Ascending aorta (tissue), 2 donors: ENCODE measurements at regions of chr1 and their contacts with region 1.

Region 1: DNA sequence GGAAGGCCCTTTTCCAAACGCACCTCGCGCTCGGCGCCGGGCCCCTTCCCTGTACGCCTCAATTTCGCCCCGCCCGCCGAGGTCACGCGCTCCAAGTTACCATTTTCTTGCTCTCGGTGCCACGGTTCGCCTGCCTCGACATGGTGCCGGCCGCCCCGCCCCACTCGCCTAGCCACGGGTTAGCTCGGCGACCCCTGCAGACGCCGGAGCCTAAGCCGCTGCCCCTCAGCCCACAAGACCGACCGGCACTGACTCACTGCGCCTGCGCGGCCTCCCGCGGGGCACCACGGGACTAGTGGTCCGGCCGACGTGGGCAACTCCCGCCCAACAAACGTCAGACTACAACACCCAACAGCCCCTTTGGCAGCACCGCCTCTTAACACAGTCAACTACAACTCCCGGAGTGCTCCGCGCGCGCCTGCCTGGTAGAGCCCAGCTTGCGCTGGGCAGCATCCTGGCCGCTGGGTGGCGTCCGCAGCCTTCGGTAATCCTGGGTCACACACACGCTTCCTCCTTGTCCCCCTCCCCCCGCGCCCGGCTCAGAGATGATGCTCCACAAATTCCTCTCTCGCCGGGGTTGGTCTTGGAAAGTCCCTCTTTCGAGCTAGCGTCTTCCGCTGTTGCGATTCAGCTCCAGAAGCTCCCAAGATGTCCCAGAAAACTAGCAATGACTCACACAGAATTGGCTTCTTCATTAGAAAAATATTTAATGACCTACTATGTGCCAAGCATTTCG is at the start of gene TRAPPC3:
- DNase-seq: peak; percentile 100
- H3K4me3 ChIP-seq: peak within 1 kb of the TSS; percentile 71 to 77
- H3K27ac ChIP-seq: peak within 1 kb of the TSS; percentile 93 to 98
- H3K4me1 ChIP-seq: peaks cover 26 to 36% of the 10 kb centered on the region in 2 donors
- H3K27me3 ChIP-seq: no peaks in the 10 kb centered on the region
- CTCF ChIP-seq: peak; percentile 88 to 98 (median 95)
- total RNA-seq, gene TRAPPC3: 52.0 TPM

Region 2: GRCh38 chr1:36034692-36035091 is 114.7 kb before region 1 on chr1:
- intact Hi-C with region 1: no loop called
- DNase-seq: no peak
- H3K4me3 ChIP-seq: no peak overlapping the region
- H3K27ac ChIP-seq: no peak overlapping the region
- H3K4me1 ChIP-seq: no peaks in the 10 kb centered on the region
- H3K27me3 ChIP-seq: no peaks in the 10 kb centered on the region
- CTCF ChIP-seq: no peak

Region 3: GRCh38 chr1:36285448-36286101 is 136.2 kb after region 1 on chr1:
- intact Hi-C with region 1: loop called (anchors 1 kb)
- DNase-seq: peak in 1 of 2 donors; percentile 86
- H3K4me3 ChIP-seq: no peak overlapping the region
- H3K27ac ChIP-seq: peak overlapping the region in 1 of 2 donors; percentile 20
- H3K4me1 ChIP-seq: peaks cover 3 to 4% of the 10 kb centered on the region in 2 donors
- H3K27me3 ChIP-seq: no peaks in the 10 kb centered on the region
- CTCF ChIP-seq: peak; percentile 63 to 71 (median 70)